ENCODE measurements at regions of chr18 and their contacts with region 1.

Region 1: GRCh38 chr18:40676668-40677067 is 1278.4 kb upstream of the PIK3C3 start:
- DNase-seq: no peak
- H3K4me3 Mint-ChIP-seq: no peak overlapping the region
- H3K27ac Mint-ChIP-seq: no peak overlapping the region
- H3K4me1 Mint-ChIP-seq: no peaks in the 10 kb centered on the region
- H3K27me3 Mint-ChIP-seq: no peaks in the 10 kb centered on the region

Region 2: GRCh38 chr18:40423291-40423690 is 253.4 kb before region 1 on chr18:
- CTCF ChIA-PET with region 1: no interaction called
- intact Hi-C with region 1: no loop called
- DNase-seq: no peak
- H3K4me3 Mint-ChIP-seq: no peak overlapping the region
- H3K27ac Mint-ChIP-seq: no peak overlapping the region
- H3K4me1 Mint-ChIP-seq: no peaks in the 10 kb centered on the region
- H3K27me3 Mint-ChIP-seq: no peaks in the 10 kb centered on the region

Region 3: GRCh38 chr18:40687399-40687798 is 10.7 kb after region 1 on chr18:
- CTCF ChIA-PET with region 1: no interaction called
- intact Hi-C with region 1: loop called (anchors 1 kb)
- DNase-seq: no peak
- H3K4me3 Mint-ChIP-seq: no peak overlapping the region
- H3K27ac Mint-ChIP-seq: no peak overlapping the region
- H3K4me1 Mint-ChIP-seq: no peaks in the 10 kb centered on the region
- H3K27me3 Mint-ChIP-seq: no peaks in the 10 kb centered on the region